ENCODE measurements at regions of chr12 and their contacts with region 1.

Region 1: GRCh38 chr12:30847259-30847658 is 79.3 kb upstream of the TSPAN11 start:
- DNase-seq: no peak
- ATAC-seq: peak; percentile 56

Region 2: DNA sequence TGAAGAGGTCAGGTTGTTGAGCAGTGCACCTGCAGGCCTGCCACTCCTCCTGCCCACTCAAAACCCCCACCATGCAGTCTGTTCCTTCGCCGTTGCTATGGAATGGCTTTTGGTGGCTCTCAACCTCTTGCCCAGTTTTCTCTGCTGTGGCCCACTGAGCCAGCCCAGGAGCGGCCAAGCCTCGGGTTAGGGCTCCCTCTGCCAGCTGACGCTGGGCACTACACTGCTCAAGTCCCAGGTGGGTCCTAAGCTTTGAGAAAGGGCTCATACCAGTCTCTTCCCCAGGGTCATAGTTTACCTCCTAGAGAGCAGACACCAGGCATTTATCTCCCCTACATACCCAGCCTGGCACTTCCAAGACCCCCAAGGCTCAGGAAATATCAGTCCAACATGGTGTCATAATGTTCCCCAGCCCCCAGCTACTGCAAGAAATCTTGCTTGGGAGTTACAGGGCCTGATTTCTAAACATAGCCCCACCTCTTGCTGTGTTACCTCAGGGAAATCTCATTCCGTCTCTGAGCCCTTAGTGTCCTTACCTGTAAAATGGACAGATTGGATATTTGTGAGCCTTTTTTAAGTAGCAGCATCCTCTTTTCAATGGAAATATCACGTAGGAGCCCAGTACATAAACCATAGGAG is 138.7 kb after region 1 on chr12:
- intact Hi-C with region 1: loop called in 1 of 2 experiments (anchors 10 kb)
- DNase-seq: peak in 1 of 2 donors; percentile 35
- ATAC-seq: peak; percentile 60

Measured in left colon (tissue), 2 donors.